Left ventricle myocardium superior (tissue), 1 donor: ENCODE measurements at regions of chr9 and their contacts with region 1.

Region 1: DNA sequence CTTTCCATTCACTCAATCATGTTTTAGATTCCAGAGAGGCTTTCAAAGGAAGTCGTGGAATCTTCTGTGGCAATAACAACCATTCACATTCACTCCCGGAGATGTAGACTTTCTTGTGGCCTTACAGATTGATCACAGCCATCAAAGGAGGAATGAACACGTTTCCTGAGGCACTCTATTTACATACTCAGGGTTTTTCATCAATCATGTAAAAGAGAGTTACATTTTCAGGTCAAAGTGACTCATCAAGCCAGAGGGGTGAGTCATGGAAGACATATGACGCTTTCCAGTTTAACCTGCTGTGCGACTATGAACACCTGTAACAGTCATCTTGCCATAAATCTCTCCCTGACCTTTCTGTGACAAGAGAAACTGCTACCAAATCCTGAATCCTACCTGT is 39.3 kb upstream of the RAD23B start:
- DNase-seq: no peak
- ATAC-seq: no peak

Region 2: DNA sequence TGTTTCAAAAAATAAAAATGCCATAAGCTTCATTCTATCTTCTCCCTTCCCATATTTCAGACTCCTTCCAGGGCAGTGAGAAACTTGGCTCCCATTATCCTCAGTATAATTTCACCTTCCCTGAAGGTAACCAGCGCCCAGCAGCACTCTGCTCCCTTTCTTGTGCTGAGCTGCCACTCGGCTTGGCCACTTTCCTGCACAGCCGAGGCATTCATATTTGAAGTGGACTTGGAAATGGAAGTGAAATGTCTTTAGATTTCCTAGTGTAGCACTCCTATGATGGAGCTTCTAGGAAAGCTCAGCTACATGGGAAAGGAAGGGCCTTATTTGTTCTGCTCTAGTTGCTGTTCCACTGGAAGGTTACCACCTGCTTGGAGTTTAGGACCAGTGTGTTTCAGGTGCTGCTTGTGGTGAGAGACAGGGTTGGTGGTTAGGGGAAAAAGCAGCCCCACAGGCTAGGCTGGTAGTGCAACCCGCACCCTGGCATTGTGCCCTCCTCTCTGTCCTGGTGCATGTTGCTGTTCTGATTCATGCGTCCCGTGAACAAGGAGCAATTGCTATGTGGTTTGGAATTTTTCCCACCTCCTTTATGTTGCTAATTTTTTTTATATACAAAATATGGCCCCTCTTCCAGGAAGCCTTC is 93.1 kb after region 1 on chr9:
- intact Hi-C with region 1: loop called (anchors 10 kb)
- DNase-seq: peak; percentile 48
- ATAC-seq: peak; percentile 48

Region 3: GRCh38 chr9:107389617-107390071 is 145.9 kb after region 1 on chr9:
- intact Hi-C with region 1: no loop called
- DNase-seq: peak; percentile 69
- ATAC-seq: peak; percentile 83